Aorta (tissue), 5 donors: ENCODE measurements at regions of chr15 and their contacts with region 1.

Region 1: DNA sequence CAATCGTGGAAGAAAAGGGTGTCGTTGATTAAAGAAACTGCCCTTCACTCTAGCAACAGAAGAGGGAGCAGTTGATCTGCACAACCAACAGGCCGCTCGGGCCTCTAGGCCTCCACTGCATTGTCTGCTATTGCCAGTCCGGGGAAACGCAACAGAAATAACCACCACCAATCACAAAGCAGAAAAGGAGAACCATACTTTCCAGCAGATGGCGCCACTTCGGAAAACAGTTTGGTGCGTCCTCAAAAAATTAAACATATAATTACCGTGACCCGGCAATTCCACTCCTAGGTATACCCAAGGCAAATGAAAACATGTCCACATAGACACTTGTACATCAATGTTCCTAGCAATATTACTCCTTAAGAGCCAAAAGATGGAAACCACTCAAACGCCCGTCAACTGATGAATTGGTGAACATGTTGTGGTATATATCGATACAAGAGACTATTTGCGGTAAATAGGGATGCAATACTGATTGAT is 154.1 kb downstream of the TJP1 start:
- DNase-seq: peak in 1 of 2 donors; percentile 66
- ATAC-seq: no peak
- H3K4me3 ChIP-seq: no peak overlapping the region
- H3K27ac ChIP-seq: no peak overlapping the region
- H3K4me1 ChIP-seq: peaks cover 0 to 4% of the 10 kb centered on the region in 2 donors
- H3K27me3 ChIP-seq: no peaks in the 10 kb centered on the region

Region 2: GRCh38 chr15:29935276-29936020 is 267.3 kb after region 1 on chr15:
- intact Hi-C with region 1: loop called in 1 of 2 experiments (anchors 5 kb)
- DNase-seq: no peak
- ATAC-seq: no peak
- H3K4me3 ChIP-seq: no peak overlapping the region
- H3K27ac ChIP-seq: no peak overlapping the region
- H3K4me1 ChIP-seq: no peaks in the 10 kb centered on the region
- H3K27me3 ChIP-seq: no peaks in the 10 kb centered on the region

Region 3: DNA sequence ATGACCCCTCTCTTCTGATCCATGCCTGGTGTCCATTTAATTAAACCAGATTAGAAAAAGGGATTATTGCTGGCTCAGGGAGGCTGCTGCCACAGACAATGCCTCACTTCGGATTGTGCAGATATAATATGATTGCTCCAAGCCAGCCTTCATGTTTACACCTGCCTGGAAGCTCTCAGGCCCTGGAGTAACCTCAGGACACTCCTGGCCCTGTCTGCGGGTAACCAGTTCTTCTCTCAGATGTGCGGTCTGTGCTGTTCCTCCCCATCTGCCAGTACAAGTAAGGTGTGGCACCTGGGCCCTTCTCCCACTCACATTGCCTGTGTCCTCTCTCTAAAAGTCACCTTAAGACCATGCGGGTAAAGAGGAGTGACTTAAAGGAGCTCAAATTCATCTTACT is 405.8 kb after region 1 on chr15:
- intact Hi-C with region 1: loop called in 1 of 2 experiments (anchors 10 kb)
- DNase-seq: no peak
- ATAC-seq: no peak
- H3K4me3 ChIP-seq: no peak overlapping the region
- H3K27ac ChIP-seq: no peak overlapping the region
- H3K4me1 ChIP-seq: no peaks in the 10 kb centered on the region
- H3K27me3 ChIP-seq: no peaks in the 10 kb centered on the region